Right lobe of liver (tissue), 6 donors: ENCODE measurements at regions of chr1 and their contacts with region 1.

Region 1: DNA sequence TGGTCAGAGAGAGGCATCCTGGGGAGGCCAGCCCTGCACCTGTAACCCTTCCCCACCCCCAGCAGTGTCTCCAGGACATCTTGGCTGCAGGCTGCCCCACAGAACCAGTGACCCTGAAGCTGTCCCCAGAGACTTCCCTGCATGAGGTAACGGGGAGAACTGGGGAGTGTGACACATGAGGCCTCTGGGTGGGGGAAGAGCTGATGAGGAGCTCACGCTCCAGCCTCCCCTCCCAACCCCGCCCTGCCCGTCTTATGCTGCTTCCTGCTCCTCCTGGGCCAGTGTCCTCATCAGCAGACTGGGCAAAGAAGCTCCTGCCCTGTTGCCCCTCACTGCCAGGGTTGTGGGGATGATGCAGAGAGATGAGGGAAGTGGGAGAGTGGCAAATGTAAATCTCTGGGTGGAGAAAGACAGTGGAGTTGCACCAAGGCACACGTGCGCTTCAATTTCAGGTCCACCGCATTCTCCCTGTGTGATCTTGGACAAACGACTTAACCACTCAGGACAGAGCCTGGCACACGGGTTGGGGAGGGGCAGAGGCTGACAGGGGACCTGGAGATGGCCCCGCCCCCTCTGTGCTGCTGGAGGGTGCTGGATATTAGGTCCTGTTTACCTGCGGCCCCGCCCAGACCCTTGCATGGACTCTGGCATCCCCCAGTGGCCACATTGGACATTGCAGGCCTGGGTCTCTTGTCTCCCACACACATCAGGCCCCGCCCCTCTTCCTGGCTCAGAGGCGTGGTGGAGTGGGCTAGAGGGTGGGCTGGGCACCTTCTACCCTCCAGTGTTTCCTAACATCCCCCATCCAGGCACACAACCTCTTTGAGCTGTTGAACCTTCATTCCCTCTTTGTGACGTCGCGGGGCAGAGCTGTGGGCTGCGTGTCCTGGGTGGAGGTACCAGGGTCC is 12.3 kb downstream of the CLCNKB start:
- DNase-seq: peak; percentile 85 to 86 (median 85)
- ATAC-seq: peak; percentile 86 to 92 (median 90)
- H3K4me3 ChIP-seq: no peak overlapping the region
- H3K27ac ChIP-seq: no peak overlapping the region
- H3K4me1 ChIP-seq: peaks cover 0 to 3% (median 0%) of the 10 kb centered on the region in 4 donors
- H3K27me3 ChIP-seq: no peaks in the 10 kb centered on the region
- CTCF ChIP-seq: peak; percentile 74 to 95 (median 92)
- POLR2A ChIP-seq: no peak

Region 2: DNA sequence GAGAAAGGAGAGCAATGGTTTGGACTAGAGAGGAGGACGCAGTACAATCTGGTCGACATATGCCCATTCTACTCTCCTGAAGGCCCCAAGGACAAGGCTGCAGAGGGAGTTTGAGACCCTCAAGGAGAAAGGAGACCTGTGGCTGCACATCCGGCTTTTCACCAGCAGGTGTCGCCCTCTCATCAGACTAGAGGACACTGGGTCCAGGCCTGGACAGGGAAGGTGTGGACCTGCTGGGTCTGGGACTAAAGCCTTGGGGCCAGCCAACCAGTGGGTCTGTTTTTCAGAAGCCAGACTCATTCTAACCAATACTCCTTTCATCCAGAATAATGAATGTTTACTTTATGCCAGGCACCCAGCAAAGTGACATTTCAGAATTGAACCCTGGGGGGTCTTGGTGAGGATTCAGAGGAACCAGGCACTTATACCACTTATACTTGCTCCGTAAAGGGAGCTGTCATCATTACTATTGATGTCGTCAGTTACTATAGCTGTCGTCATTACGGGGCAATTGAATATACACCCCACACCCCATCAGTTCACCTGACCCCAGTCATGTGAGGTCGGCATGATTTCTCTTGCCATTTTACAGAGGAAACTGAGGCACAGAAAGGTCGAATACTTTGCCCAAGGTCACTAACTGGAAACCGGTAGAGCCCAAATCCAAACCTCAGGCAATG is 46.7 kb before region 1 on chr1:
- intact Hi-C with region 1: loop called (anchors 5 to 10 kb)
- DNase-seq: peak; percentile 79 to 81 (median 80)
- ATAC-seq: peak; percentile 63 to 76 (median 74)
- H3K4me3 ChIP-seq: no peak overlapping the region
- H3K27ac ChIP-seq: no peak overlapping the region
- H3K4me1 ChIP-seq: peaks cover 0 to 11% (median 2%) of the 10 kb centered on the region in 4 donors
- H3K27me3 ChIP-seq: no peaks in the 10 kb centered on the region
- CTCF ChIP-seq: peak; percentile 93 to 98 (median 97)
- POLR2A ChIP-seq: no peak

Region 3: GRCh38 chr1:16133007-16133961 is 77.4 kb after region 1 on chr1:
- intact Hi-C with region 1: no loop called
- DNase-seq: no peak
- ATAC-seq: peak in 2 of 4 donors; percentile 4 to 9
- H3K4me3 ChIP-seq: no peak overlapping the region
- H3K27ac ChIP-seq: peak overlapping the region in 1 of 3 donors; percentile 51
- H3K4me1 ChIP-seq: no peaks in the 10 kb centered on the region
- H3K27me3 ChIP-seq: no peaks in the 10 kb centered on the region
- CTCF ChIP-seq: no peak
- POLR2A ChIP-seq: no peak